OCI-LY7 (cell line): ENCODE measurements at regions of chr5 and their contacts with region 1.

Region 1: DNA sequence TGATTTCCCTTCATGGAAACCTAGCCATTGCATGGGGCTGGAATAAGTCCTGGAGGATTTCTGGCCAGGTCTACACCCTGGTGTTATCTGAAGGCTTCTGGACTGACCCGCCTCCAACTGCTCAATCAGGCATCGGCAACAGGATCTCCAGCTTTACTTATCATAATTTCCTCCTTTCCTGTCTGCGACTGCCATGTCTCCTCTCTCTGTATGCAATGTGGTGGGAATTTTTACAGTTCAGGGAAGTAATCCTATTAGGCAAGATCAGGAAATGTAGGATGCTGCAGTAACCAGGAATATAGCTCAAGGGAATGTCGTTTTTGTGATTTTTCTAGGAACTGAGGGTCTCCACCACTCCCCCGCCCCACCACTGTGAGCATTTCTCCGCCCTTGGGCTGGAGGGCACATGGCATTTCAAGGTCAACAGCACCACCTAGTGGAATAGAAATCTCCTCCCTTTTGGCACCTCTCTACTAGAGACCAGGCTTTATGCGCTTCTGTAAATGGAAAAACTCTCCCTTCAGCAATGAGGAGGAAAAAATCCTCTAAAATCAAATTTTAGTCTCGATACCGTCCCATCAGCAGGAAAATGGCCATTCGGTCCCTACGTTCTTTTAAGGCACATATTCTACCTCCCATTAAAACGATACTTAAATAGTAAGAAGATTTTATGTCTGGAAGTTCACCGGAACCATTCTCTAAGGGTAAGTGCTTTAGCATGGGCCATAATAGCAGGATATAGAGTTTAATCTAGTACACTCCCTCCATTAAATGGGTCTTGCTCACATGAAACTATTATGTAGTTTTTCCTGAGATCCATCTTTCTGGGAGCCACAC is 93.0 kb downstream of the YTHDC2 start:
- DNase-seq: peak; percentile 74
- H3K4me3 ChIP-seq: no peak overlapping the region
- H3K27ac ChIP-seq: no peak overlapping the region
- H3K4me1 ChIP-seq: no peaks in the 10 kb centered on the region
- CTCF ChIP-seq: peak; percentile 89

Region 2: GRCh38 chr5:112995764-112996618 is 610.5 kb before region 1 on chr5:
- CTCF ChIA-PET with region 1: no interaction called
- POLR2A ChIA-PET with region 1: no interaction called
- intact Hi-C with region 1: loop called (anchors 1 kb)
- DNase-seq: peak; percentile 76
- H3K4me3 ChIP-seq: no peak overlapping the region
- H3K27ac ChIP-seq: no peak overlapping the region
- H3K4me1 ChIP-seq: no peaks in the 10 kb centered on the region
- CTCF ChIP-seq: peak; percentile 98

Region 3: DNA sequence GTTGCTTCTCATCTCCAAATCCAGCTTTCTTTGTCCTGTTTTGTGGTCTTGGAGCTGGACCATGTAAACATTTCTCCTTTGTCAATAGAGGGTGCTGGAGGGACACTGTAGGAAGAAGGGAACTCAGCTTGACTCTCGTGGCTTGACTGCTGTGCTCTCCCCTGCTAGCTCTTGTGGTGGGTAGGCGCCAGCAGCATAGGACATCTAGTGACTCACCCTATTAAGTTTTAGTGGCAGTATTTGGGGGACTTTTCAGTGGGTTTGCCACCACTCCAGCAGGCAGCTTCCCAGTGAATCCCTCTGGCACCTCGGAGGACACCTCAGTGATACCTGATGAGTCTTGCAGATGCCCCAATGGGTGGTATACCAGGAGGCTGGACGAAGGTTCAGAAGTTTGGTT is 269.5 kb before region 1 on chr5:
- CTCF ChIA-PET with region 1: no interaction called
- POLR2A ChIA-PET with region 1: no interaction called
- intact Hi-C with region 1: loop called (anchors 1 kb)
- DNase-seq: peak; percentile 23
- H3K4me3 ChIP-seq: no peak overlapping the region
- H3K27ac ChIP-seq: no peak overlapping the region
- H3K4me1 ChIP-seq: no peaks in the 10 kb centered on the region
- CTCF ChIP-seq: peak; percentile 61

Region 4: GRCh38 chr5:113513384-113514288 is 92.9 kb before region 1 on chr5 and contains the start of gene YTHDC2:
- CTCF ChIA-PET with region 1: no interaction called
- POLR2A ChIA-PET with region 1: interaction called, 3 read pairs
- intact Hi-C with region 1: loop called (anchors 2 kb)
- DNase-seq: peak; percentile 88
- H3K4me3 ChIP-seq: peak within 1 kb of the TSS; percentile 79
- H3K27ac ChIP-seq: peak within 1 kb of the TSS; percentile 37
- H3K4me1 ChIP-seq: peaks cover 23% of the 10 kb centered on the region
- CTCF ChIP-seq: peak; percentile 65
- total RNA-seq, gene YTHDC2: 30.6 and 40.3 TPM in 2 replicates